WTC11 (cell line): ENCODE measurements at regions of chr1 and their contacts with region 1.

Region 1: GRCh38 chr1:64493831-64494230 is 23.9 kb downstream of the CACHD1 start:
- DNase-seq: peak; percentile 86
- ATAC-seq: peak; percentile 91
- H3K4me3 Mint-ChIP-seq: peak overlapping the region; percentile 57
- H3K27ac Mint-ChIP-seq: peak overlapping the region; percentile 97
- H3K4me1 Mint-ChIP-seq: peaks cover 90% of the 10 kb centered on the region
- H3K27me3 Mint-ChIP-seq: no peaks in the 10 kb centered on the region
- CTCF ChIP-seq: no peak

Region 2: GRCh38 chr1:64472805-64473204 is 21.0 kb before region 1 on chr1:
- CTCF ChIA-PET with region 1: interaction called, 5 read pairs
- POLR2A ChIA-PET with region 1: interaction called, 11 read pairs
- DNase-seq: peak; percentile 73
- ATAC-seq: peak; percentile 57
- H3K4me3 Mint-ChIP-seq: peak overlapping the region; percentile 95
- H3K27ac Mint-ChIP-seq: peak overlapping the region; percentile 96
- H3K4me1 Mint-ChIP-seq: peaks cover 54% of the 10 kb centered on the region
- H3K27me3 Mint-ChIP-seq: peaks cover 18% of the 10 kb centered on the region
- CTCF ChIP-seq: no peak

Region 3: DNA sequence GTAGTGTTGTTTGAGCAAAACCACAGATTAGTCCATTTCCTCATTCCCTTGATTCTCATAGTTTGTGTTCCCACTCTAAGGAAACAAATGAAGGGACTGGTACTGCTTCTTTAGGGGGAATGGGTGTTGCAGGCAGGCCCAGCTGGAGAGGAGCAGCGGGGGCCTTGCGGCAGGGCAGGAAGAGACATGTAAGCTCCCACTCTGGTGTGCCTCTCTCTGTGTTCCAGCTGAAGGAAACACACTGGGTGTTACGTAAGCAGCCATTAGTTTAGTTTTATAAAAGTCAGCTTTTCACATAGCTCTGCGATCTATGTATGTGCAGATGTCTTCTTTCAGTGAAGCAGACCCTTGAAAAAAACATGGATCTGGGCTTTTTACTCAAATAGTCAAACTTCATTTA is 75.6 kb after region 1 on chr1:
- CTCF ChIA-PET with region 1: no interaction called
- POLR2A ChIA-PET with region 1: no interaction called
- DNase-seq: no peak
- ATAC-seq: no peak
- H3K4me3 Mint-ChIP-seq: no peak overlapping the region
- H3K27ac Mint-ChIP-seq: 0 out of 2 replicates have a peak overlapping the region, but pooled peaks have one; percentile 42
- H3K4me1 Mint-ChIP-seq: peaks cover 90% of the 10 kb centered on the region
- H3K27me3 Mint-ChIP-seq: no peaks in the 10 kb centered on the region
- CTCF ChIP-seq: no peak